ENCODE measurements at regions of chr11 and their contacts with region 1.

Region 1: GRCh38 chr11:96207459-96208449 is 135.2 kb downstream of the MAML2 start:
- DNase-seq: peak; percentile 49
- H3K4me3 Mint-ChIP-seq: peak overlapping the region; percentile 40
- H3K27ac Mint-ChIP-seq: peak overlapping the region; percentile 98
- H3K4me1 Mint-ChIP-seq: peaks cover 88% of the 10 kb centered on the region
- H3K27me3 Mint-ChIP-seq: no peaks in the 10 kb centered on the region

Region 2: DNA sequence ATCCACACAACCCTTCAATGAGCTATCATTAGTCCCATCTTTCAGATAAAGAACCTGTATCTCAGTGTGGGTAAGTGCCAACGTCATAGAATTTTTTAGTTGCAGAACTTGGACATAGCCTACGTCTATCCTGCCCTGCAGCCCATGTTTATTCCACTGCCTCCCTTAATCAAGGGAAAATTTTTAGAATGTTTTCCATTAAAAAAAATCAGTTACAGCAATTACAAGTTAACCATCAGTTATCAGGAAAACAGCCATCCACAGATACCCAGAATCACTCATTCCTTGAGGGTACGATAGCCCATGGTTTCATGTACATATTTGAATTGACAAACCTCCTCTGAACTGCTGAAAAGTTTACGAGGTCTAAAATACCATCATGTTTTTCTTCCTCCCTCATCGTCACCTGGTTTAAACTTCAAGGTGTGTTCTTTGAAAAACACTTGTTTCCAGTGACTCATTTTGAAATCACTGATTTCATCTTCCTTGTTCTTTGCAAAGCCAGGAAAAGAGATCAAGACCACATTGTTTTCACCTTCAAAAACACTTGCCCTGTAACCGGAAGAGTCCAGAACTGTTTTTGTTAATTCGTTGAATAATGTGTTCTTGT is 519.1 kb before region 1 on chr11:
- CTCF ChIA-PET with region 1: no interaction called
- intact Hi-C with region 1: loop called (anchors 5 kb)
- DNase-seq: no peak
- H3K4me3 Mint-ChIP-seq: no peak overlapping the region
- H3K27ac Mint-ChIP-seq: no peak overlapping the region
- H3K4me1 Mint-ChIP-seq: peaks cover 38% of the 10 kb centered on the region
- H3K27me3 Mint-ChIP-seq: no peaks in the 10 kb centered on the region

Region 3: DNA sequence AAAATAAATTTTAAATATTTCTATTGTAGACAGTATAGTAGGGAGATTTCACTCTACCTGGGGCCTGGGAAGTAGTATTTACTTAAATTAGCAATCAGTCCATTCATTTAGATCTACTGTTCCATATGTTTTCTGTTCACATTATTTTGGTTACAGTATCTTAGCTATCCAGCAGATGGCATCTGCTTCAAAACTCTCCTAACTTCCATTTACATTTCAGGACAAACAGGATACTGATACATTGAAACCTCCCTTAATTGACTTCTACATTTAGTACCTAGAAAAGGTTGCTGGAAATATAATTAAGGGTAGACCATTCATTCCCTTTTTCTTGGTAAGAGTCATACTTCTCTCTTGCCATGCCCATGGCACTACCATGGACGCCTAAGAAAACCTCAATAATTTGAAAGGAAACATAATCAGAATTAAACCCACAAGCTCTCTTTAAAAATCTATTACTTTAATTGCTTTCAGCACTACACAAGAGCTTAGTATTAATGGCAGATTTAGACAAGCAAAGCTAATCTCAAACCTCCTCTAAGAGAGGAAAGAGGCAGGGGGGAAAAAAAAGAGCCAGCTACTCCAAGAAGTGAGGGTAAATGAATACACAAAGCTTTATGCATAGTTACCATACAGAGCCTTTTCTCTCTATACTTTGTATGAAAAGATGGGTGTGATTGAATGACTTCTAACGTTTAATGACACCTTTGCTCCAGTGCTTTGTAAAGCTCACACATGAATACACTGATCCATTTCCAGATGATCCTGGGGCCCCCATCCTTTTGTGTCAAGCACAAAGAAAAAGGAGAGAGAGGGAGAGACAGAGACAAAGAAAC is 152.7 kb before region 1 on chr11:
- CTCF ChIA-PET with region 1: no interaction called
- intact Hi-C with region 1: loop called (anchors 1 kb)
- DNase-seq: no peak
- H3K4me3 Mint-ChIP-seq: no peak overlapping the region
- H3K27ac Mint-ChIP-seq: peak overlapping the region; percentile 87
- H3K4me1 Mint-ChIP-seq: peaks cover 81% of the 10 kb centered on the region
- H3K27me3 Mint-ChIP-seq: no peaks in the 10 kb centered on the region

Region 4: GRCh38 chr11:96149743-96150555 is 57.8 kb before region 1 on chr11:
- CTCF ChIA-PET with region 1: no interaction called
- intact Hi-C with region 1: loop called (anchors 1 kb)
- DNase-seq: no peak
- H3K4me3 Mint-ChIP-seq: no peak overlapping the region
- H3K27ac Mint-ChIP-seq: no peak overlapping the region
- H3K4me1 Mint-ChIP-seq: peaks cover 59% of the 10 kb centered on the region
- H3K27me3 Mint-ChIP-seq: no peaks in the 10 kb centered on the region

Region 5: DNA sequence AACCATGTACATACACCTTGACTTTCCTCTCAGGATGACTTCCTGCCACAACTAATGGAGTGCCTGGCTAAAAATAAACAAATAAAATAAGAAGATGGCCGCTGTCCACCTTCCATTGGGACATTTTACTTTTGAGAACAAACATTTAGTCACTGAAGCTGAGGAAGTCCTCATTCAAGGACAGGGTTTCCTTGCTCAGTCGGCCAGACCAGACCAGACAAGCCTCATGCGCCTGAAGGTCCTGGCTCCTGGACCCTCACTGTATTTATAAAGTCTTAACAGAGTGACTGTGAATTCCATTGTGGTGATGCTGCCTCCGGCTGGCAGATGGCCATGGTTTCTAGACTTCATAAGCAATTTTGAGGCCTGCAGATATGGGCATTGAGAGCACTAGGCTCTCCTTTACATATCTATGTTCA is 20.7 kb after region 1 on chr11:
- CTCF ChIA-PET with region 1: no interaction called
- intact Hi-C with region 1: loop called (anchors 1 kb)
- DNase-seq: no peak
- H3K4me3 Mint-ChIP-seq: no peak overlapping the region
- H3K27ac Mint-ChIP-seq: peak overlapping the region; percentile 81
- H3K4me1 Mint-ChIP-seq: peaks cover 78% of the 10 kb centered on the region
- H3K27me3 Mint-ChIP-seq: no peaks in the 10 kb centered on the region

Region 6: GRCh38 chr11:96242971-96243647 is 35.4 kb after region 1 on chr11:
- CTCF ChIA-PET with region 1: interaction called, 3 read pairs
- intact Hi-C with region 1: loop called (anchors 1 kb)
- DNase-seq: peak; percentile 94
- H3K4me3 Mint-ChIP-seq: peak overlapping the region; percentile 84
- H3K27ac Mint-ChIP-seq: peak overlapping the region; percentile 95
- H3K4me1 Mint-ChIP-seq: peaks cover 54% of the 10 kb centered on the region
- H3K27me3 Mint-ChIP-seq: no peaks in the 10 kb centered on the region

Region 7: GRCh38 chr11:96267496-96268032 is 59.8 kb after region 1 on chr11:
- CTCF ChIA-PET with region 1: no interaction called
- intact Hi-C with region 1: loop called (anchors 1 kb)
- DNase-seq: peak; percentile 78
- H3K4me3 Mint-ChIP-seq: peak overlapping the region; percentile 29
- H3K27ac Mint-ChIP-seq: peak overlapping the region; percentile 89
- H3K4me1 Mint-ChIP-seq: peaks cover 96% of the 10 kb centered on the region
- H3K27me3 Mint-ChIP-seq: no peaks in the 10 kb centered on the region

Region 8: DNA sequence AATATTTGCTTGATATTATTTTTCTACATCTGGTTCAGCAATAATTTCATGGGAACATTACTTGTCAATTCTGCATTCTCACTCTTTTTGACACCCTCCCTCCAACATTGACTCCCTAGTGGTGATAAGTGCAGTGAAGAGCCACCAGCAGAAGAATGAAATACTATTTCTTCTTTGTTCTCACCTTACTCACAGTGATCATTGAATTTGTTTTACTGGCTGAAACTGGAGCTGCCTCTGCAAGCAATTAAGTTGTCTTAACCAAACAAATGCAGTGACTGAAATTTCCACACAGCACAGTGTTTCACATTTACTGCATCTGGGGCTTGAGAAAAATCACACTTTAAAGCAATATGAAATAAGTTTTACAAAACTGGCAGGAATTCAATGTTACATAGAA is 371.9 kb after region 1 on chr11:
- CTCF ChIA-PET with region 1: no interaction called
- intact Hi-C with region 1: no loop called
- DNase-seq: no peak
- H3K4me3 Mint-ChIP-seq: no peak overlapping the region
- H3K27ac Mint-ChIP-seq: no peak overlapping the region
- H3K4me1 Mint-ChIP-seq: no peaks in the 10 kb centered on the region
- H3K27me3 Mint-ChIP-seq: no peaks in the 10 kb centered on the region